Panc1 (cell line): ENCODE measurements at regions of chrX and their contacts with region 1.

Region 1: GRCh38 chrX:53683556-53684414 is 2.7 kb downstream of the HUWE1 start:
- DNase-seq: peak; percentile 98
- ATAC-seq: peak; percentile 84
- H3K4me3 ChIP-seq: peak overlapping the region; percentile 83 to 90
- H3K27ac ChIP-seq: peak overlapping the region; percentile 93
- H3K4me1 ChIP-seq: peaks cover 5% of the 10 kb centered on the region
- H3K27me3 ChIP-seq: no peaks in the 10 kb centered on the region
- CTCF ChIP-seq: no peak

Region 2: DNA sequence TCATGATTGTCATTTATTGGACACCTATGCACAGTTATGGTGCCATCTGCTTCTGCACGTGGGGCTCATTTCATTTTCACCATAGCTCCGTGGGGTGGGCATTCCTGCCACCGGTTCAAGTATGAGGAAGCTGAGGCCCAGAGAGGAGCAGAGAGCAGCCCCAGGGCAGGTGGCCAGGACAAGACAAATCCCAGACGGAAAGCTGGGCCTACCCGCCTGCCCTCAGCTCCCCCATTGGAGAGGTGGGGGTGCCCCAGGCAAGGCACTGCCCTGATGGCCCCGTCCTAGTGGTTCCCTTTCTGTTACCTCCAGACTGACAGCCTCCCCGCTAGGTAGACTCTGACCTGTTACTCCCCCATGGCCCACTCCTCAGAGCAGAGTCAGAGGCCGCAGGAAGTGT is 76.3 kb after region 1 on chrX:
- CTCF ChIA-PET with region 1: no interaction called
- POLR2A ChIA-PET with region 1: interaction called, 11 read pairs
- in situ Hi-C with region 1: no loop called
- intact Hi-C with region 1: no loop called
- DNase-seq: no peak
- ATAC-seq: no peak
- H3K4me3 ChIP-seq: no peak overlapping the region
- H3K27ac ChIP-seq: no peak overlapping the region
- H3K4me1 ChIP-seq: no peaks in the 10 kb centered on the region
- H3K27me3 ChIP-seq: no peaks in the 10 kb centered on the region
- CTCF ChIP-seq: no peak

Region 3: DNA sequence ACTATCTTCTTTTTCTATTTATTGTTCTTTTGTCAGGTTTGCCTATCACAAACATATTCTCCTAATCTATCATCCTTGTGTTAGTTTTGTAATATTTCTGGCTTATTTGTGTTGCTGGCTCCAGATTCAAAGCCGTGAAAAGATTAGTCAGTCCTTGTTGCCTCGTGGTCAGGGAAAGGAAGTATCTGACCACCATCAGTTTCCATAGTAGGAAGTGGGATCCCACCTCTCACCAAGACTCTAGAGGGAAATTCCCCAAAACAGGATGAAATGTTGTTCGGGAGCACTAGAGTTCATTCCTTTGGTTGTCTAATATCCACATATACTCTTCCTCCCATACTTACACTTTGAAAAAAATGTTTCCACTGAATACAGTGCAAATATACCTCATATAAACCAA is 133.8 kb after region 1 on chrX:
- CTCF ChIA-PET with region 1: no interaction called
- POLR2A ChIA-PET with region 1: interaction called, 16 read pairs
- in situ Hi-C with region 1: no loop called
- intact Hi-C with region 1: no loop called
- DNase-seq: no peak
- ATAC-seq: no peak
- H3K4me3 ChIP-seq: no peak overlapping the region
- H3K27ac ChIP-seq: no peak overlapping the region
- H3K4me1 ChIP-seq: no peaks in the 10 kb centered on the region
- H3K27me3 ChIP-seq: no peaks in the 10 kb centered on the region
- CTCF ChIP-seq: no peak

Region 4: DNA sequence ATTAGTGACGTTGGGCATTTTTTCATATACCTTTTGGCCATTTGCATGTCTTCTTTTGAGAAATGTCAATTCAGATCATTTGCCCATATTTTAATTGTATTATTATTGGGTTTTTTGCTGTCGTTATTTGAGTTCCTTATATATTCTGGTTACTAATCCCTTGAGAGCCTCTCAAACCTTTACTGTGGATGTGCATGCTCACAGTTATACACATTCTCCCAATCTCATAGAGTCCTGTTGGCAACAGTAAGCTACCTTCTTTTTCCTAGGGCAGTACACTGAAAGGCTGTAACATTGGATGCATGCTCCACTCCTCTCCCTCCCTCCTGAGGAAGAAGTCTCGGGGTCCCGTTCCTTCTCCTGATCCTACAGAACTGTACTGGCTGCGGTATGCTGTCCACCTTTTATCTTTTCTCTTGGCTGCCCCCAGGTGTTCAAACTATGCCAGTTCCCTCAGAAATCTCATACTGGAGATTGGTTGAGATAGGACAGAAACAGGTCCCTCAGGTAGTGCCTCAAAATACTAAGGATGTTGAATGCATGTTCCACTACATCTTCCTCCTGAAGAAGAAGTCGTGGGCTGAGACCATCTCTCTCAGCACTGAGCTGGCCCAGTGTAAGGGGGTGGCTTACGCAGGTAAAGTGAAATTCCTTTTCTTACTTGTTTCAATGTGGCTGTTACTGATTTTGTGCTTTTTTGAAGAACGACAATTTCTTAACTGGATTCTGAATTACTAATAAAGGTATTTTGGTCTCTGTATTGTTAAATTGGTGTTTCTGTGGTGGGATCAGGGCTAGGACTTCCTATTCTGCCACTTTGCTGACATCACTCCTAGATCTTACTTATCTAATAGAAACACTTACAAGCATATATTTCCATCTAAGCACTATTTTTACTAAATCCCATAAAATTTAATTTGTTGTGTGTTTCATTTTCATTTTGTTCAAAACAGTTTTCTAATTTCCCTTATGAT is 148.2 kb after region 1 on chrX:
- CTCF ChIA-PET with region 1: interaction called, 3 read pairs
- POLR2A ChIA-PET with region 1: no interaction called
- in situ Hi-C with region 1: no loop called
- intact Hi-C with region 1: loop called (anchors 10 kb)
- DNase-seq: no peak
- ATAC-seq: peak; percentile 82
- H3K4me3 ChIP-seq: no peak overlapping the region
- H3K27ac ChIP-seq: no peak overlapping the region
- H3K4me1 ChIP-seq: no peaks in the 10 kb centered on the region
- H3K27me3 ChIP-seq: no peaks in the 10 kb centered on the region
- CTCF ChIP-seq: peak; percentile 67

Region 5: DNA sequence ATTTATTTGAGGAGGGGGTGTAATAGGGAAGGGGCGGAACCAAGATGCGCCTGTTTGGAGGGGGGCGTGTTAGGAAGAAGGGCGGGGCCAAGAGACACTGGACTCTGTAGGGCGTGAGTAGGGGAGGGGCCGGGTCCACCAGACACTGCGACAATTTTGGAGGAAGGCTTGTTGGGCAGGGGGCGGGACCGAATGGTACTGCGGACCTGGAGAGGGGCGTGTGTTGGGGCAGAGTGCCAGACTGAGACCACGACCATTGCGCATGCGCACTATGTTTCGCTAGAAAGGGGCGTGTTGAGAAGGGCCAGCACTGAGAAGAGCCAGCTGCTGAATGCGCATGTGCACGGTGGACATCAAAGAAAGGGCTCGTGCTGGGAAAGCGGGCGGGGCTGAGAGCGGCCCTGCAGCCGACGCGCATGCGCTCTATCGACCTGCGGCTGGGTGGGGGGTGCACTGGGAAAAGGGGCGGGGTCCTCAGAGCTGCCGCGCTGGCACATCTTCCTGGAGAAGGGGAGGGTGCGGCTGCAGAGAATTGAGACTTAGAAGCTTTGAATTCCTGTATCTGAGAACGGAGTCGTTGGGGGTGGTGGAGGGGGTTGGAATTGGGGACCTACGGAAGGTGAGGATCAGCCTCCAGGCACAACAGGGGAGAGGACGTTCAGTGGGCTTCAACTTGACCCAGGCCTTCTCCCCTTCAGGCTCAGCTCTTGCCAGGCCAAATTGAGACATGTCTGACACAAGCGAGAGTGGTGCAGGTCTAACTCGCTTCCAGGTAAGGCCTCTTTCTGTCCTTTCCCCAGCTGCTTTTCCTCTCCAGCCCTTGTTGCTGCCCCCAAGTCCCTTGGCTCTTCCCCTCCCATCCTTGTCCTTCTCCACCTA is 1125.1 kb after region 1 on chrX:
- CTCF ChIA-PET with region 1: no interaction called
- POLR2A ChIA-PET with region 1: interaction called, 11 read pairs
- in situ Hi-C with region 1: no loop called
- intact Hi-C with region 1: no loop called
- DNase-seq: peak; percentile 94
- ATAC-seq: peak; percentile 90
- H3K4me3 ChIP-seq: peak overlapping the region; percentile 73 to 80
- H3K27ac ChIP-seq: peak overlapping the region; percentile 83
- H3K4me1 ChIP-seq: peaks cover 3% of the 10 kb centered on the region; the same call in 1 of the 2 replicates
- H3K27me3 ChIP-seq: peaks cover 3% of the 10 kb centered on the region
- CTCF ChIP-seq: no peak